Activated CD4-positive, alpha-beta memory T cell treated with anti-CD3 and anti-CD28 coated beads, Interleukin-2, amount 10 ng/mL, durations not matched to agents 7 days and 5 days (primary cell): ENCODE measurements at regions of chrX and their contacts with region 1.

Region 1: DNA sequence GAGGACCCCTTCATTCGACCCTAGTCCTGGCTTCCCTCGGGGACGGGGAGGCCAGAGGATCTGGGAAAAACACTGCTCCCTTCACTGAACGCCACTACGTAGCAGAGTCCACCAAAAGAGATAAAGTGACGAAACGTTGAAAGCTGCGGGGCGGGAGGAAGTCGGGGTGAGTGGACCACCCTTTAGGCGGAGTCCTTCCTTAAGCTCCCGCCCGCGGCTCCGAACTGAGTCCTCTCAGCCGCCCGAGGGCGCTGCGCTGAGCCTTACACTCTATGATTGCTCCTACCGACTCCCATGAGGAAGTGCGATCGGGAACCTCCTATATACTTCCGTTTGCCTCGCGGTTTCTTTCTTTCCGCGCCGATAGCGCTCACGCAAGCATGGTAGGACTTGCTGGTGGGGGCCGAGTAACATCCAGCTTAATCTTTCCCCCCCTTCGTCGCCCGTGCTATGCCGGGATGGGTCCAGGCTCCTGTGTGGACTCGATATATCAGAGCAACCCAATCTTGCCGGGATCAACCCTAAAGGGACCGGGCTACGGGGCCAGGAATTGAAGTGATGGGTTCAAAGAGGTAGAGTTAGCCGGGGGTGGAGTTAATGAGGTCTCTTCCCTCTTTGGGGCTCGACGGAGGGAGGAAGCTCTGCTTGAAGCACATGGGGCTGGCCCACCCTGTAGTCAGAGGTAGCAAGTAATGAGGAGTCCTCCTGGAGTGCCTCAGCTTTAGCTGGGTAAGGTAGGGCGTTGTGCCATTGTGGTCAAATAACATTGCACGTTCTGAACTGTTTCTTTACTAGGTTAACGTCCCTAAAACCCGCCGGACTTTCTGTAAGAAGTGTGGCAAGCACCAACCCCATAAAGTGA is at the start of gene RPL36A:
- DNase-seq: peak; percentile 83
- H3K4me3 Mint-ChIP-seq: peak within 1 kb of the TSS; percentile 96
- H3K27ac Mint-ChIP-seq: peak within 1 kb of the TSS; percentile 81
- H3K4me1 Mint-ChIP-seq: peaks cover 32% of the 10 kb centered on the region
- H3K27me3 Mint-ChIP-seq: no peaks in the 10 kb centered on the region
- total RNA-seq, gene RPL36A: 229 to 246 TPM

Region 2: DNA sequence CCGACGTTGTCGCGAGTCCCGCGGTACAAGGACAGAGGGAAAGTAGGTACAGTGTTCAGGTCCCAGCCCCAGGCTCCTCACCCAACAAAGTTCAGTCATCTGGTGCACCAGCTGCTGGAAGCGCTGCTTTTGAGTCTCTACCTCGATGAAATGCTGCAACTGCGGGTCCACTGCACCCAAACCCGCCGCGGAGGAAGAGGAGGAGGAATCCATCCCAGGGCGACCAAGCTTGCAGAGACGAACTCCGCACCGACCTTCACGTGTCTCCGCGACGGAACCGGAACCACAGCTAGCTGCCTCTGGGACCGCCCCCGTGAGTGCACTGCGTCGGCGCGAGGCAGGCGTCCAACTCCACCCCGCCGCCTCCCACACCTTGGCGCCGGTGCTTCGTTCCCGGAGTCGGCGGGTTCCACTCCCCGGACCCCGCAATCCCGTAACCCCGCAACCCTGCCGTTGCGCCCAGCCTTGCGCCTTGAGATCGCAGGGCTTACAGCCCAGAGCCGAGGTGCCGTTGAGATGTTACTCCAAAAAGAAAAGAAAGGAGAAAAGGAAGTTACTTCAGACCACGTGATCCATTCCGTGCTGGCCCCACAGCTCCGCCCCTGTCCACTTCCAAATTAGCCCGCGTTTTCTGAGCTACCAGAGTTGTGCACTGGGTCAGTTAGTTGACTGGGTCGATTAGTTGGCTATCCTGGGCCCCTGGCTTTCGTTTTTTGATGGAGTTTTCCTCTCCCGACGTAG is 42.3 kb before region 1 on chrX and contains the start of gene TIMM8A:
- CTCF ChIA-PET with region 1: interaction called, 13 read pairs
- POLR2A ChIA-PET with region 1: interaction called, 34 read pairs
- DNase-seq: peak; percentile 80
- H3K4me3 Mint-ChIP-seq: peak within 1 kb of the TSS; percentile 87
- H3K27ac Mint-ChIP-seq: peak within 1 kb of the TSS; percentile 83
- H3K4me1 Mint-ChIP-seq: peaks cover 15% of the 10 kb centered on the region
- H3K27me3 Mint-ChIP-seq: no peaks in the 10 kb centered on the region
- total RNA-seq, gene TIMM8A: 8.4 to 11.3 TPM

Region 3: DNA sequence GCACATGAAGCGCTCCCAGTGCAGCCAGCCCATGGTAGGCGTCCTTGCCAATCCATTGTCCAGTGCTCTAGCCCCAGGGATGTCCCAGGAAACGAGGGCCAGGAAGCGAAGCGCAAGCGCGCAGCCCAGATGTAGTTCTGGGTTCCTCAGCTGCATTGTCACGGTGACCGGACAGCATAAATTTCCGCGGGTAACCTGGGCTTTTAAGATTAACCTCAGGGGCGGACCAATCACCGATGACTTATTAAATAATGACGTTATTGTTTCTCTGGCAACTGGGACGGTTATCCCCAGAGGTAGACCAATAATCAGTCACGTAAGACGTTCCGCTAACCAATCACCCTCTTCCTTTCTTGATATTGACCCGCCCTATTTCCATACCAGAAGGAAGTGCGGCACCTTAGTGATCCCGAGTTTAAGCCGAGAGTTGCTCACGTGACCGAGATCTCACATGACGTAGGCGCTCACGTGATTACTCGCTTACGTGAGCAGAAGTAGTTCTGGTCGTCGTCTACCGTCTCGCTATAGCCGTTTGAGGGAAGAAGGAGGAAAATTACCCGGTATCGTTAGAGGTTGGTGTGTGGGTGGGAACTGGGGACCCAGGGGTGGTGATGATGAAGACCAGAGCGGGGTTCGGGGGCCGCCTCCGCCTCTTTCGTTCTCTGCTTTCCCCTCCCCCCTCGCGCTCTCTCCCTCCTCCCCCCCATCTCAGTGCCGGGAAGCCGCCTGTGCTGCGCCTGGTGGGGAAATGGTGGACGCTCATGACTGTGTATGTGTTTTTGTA is 17.0 kb after region 1 on chrX and contains the starts of genes GLA and HNRNPH2:
- CTCF ChIA-PET with region 1: interaction called, 7 read pairs
- POLR2A ChIA-PET with region 1: interaction called, 10 read pairs
- DNase-seq: peak; percentile 90
- H3K4me3 Mint-ChIP-seq: peak within 1 kb of the TSS; percentile 89
- H3K27ac Mint-ChIP-seq: peak within 1 kb of the TSS; percentile 97
- H3K4me1 Mint-ChIP-seq: peaks cover 35% of the 10 kb centered on the region
- H3K27me3 Mint-ChIP-seq: no peaks in the 10 kb centered on the region
- total RNA-seq, gene GLA: 35.6 to 38.3 TPM
- total RNA-seq, gene HNRNPH2: 46.2 TPM

Region 4: GRCh38 chrX:101417981-101418841 is 27.3 kb after region 1 on chrX:
- CTCF ChIA-PET with region 1: interaction called, 7 read pairs
- POLR2A ChIA-PET with region 1: interaction called, 10 read pairs
- DNase-seq: peak; percentile 42
- H3K4me3 Mint-ChIP-seq: peak overlapping the region; percentile 81
- H3K27ac Mint-ChIP-seq: peak overlapping the region; percentile 78
- H3K4me1 Mint-ChIP-seq: peaks cover 38% of the 10 kb centered on the region
- H3K27me3 Mint-ChIP-seq: no peaks in the 10 kb centered on the region

Region 5: DNA sequence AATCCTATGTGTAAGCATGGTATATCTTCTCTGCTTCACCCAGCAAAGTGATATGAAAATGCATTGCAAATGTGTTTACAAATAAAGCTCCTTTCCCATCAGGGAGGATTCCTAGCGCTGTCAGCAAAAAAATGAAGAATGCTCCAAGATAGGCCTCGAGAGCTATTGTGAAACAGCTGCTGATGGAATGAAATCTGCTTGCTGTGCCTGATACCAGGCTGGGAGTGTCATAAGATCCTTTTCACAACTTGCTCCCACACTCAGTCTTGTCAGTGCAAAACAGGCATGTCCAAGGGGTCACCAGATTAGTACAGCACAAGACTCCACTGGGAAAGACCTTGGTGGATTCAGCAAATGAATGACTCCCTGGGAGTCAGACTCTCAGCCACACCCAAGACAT is 51.2 kb after region 1 on chrX:
- CTCF ChIA-PET with region 1: no interaction called
- POLR2A ChIA-PET with region 1: no interaction called
- DNase-seq: no peak
- H3K4me3 Mint-ChIP-seq: no peak overlapping the region
- H3K27ac Mint-ChIP-seq: no peak overlapping the region
- H3K4me1 Mint-ChIP-seq: no peaks in the 10 kb centered on the region
- H3K27me3 Mint-ChIP-seq: no peaks in the 10 kb centered on the region